Activated CD4-positive, alpha-beta T cell treated with anti-CD3 and anti-CD28 coated beads for 36 hours (primary cell): ENCODE measurements at regions of chr12 and their contacts with region 1.

Region 1: DNA sequence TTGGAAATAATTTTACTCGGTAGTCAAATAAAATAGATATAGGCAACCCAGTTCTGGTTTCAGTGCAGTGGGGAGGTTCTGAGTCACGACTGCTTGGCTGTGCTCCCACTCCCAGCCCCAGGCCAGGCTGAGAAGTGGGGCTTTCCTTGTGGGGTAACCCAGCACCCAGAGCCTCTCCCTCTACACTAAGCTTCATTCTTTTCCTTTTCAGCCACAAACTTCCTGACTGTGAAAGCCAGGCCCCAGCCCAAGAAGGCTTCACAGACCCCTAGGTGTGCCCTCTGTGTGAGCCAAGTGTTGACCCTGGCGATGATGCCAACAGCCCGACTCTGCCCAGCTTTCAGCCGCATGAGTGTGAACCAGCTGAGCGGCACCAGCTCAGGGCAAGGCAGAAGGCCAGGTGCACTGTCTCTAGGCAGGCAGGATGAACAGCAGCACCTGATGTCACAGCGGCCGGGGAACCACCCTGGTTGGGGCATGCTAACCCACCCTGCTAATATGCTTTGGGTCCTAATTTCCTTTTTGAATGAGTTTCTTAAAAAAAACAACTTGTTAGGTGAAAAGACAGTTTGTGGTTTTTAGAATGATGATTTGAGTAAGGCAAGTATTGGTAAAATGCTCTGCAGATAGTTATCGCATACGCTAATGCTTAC is 42.2 kb upstream of the ATP23 start:
- DNase-seq: peak; percentile 91
- ATAC-seq: peak; percentile 92
- H3K4me3 Mint-ChIP-seq: peak overlapping the region; percentile 23
- H3K27ac Mint-ChIP-seq: peak overlapping the region; percentile 92
- H3K4me1 Mint-ChIP-seq: peaks cover 48% of the 10 kb centered on the region
- H3K27me3 Mint-ChIP-seq: no peaks in the 10 kb centered on the region

Region 2: GRCh38 chr12:57771708-57772428 is 127.3 kb before region 1 on chr12 and contains the start of gene METTL1:
- CTCF ChIA-PET with region 1: interaction called, 4 read pairs
- POLR2A ChIA-PET with region 1: no interaction called
- intact Hi-C with region 1: loop called in 1 of 2 experiments (anchors 2 kb)
- DNase-seq: peak; percentile 97
- ATAC-seq: peak; percentile 89
- H3K4me3 Mint-ChIP-seq: peak within 1 kb of the TSS; percentile 94
- H3K27ac Mint-ChIP-seq: peak within 1 kb of the TSS; percentile 98
- H3K4me1 Mint-ChIP-seq: peaks cover 24% of the 10 kb centered on the region
- H3K27me3 Mint-ChIP-seq: no peaks in the 10 kb centered on the region
- total RNA-seq, gene METTL1: 31.9 to 33.5 TPM

Region 3: DNA sequence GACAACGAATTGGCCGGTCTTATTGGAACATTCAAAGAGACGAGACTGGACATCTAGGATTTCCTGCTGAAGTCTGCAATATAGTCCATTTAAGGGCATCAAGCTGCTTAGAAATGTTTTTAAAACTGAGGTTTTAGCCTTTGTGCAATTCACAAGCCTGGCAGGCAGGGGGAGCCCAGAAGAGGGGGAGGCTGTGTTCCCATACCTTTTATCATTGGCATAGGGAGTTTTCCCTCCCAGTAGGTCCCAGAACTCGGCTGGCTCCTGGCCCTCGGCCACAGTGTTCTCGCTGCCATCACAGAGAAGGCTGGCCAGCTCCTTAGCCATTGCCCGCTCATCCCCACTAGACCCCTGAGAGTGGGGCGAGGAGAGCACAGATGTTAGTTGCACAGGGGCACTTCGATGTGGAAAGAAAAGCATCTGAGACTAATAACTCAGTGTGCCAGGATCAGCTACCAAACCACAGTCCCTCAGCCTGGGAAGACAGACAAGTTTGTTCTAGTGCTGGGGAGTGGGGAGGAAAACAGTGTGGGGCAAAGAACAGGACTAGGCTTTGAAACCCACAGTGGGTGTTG is 95.7 kb before region 1 on chr12:
- CTCF ChIA-PET with region 1: interaction called, 51 read pairs
- POLR2A ChIA-PET with region 1: no interaction called
- intact Hi-C with region 1: no loop called
- DNase-seq: peak; percentile 60
- ATAC-seq: peak; percentile 70
- H3K4me3 Mint-ChIP-seq: no peak overlapping the region
- H3K27ac Mint-ChIP-seq: no peak overlapping the region
- H3K4me1 Mint-ChIP-seq: no peaks in the 10 kb centered on the region
- H3K27me3 Mint-ChIP-seq: no peaks in the 10 kb centered on the region

Region 4: DNA sequence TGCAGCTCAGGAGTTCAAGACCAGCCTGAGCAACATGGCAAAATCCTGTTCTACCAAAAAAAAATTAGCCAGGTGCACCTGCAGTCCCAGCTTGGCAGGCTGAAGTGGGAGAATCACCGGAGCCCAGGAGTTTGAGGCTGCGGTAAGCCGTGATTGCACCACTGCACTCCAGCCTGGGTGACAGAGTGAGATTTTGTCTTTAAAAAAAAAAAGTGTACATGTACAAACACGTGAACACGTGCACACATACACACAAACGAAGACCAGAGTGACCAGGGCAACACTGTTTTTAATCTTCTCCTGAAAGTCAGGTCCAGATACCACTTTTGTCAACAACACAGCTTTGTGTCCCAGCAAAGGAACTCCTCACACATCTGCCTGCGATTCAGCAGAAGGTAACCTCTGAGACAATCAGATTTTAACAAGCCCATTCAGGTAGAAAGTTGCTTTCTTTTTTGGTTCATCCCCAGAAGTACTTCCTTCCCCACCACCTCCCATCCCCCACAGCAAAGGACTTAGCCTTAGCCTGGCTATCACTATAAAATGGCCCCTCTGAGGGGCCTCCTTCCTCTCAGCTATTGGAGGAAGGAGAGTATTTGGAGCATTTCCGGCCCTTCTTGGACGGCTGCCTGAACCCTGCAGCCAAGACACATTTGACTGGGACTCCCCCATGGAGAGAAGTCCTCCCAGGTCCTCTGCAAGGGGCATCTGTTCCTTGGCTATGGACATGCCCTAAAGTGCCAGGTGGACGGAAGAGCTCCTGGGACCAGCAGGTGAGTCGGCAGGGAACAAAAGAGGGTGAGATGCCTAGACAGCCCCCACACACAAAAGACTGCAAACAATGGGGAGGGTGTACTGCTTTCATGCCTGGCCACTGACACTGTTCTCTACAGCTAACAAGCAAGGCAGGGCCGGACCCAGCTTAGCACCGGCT is 62.4 kb before region 1 on chr12:
- CTCF ChIA-PET with region 1: interaction called, 57 read pairs
- POLR2A ChIA-PET with region 1: interaction called, 5 read pairs
- intact Hi-C with region 1: loop called in 1 of 2 experiments (anchors 2 kb)
- DNase-seq: peak; percentile 68
- ATAC-seq: peak; percentile 51
- H3K4me3 Mint-ChIP-seq: peak overlapping the region; percentile 49
- H3K27ac Mint-ChIP-seq: peak overlapping the region; percentile 85
- H3K4me1 Mint-ChIP-seq: peaks cover 94% of the 10 kb centered on the region
- H3K27me3 Mint-ChIP-seq: no peaks in the 10 kb centered on the region

Region 5: GRCh38 chr12:57865090-57865751 is 33.9 kb before region 1 on chr12:
- CTCF ChIA-PET with region 1: interaction called, 16 read pairs
- POLR2A ChIA-PET with region 1: interaction called, 3 read pairs
- intact Hi-C with region 1: loop called (anchors 2 kb)
- DNase-seq: peak; percentile 84
- ATAC-seq: peak; percentile 96
- H3K4me3 Mint-ChIP-seq: peak overlapping the region; percentile 66
- H3K27ac Mint-ChIP-seq: peak overlapping the region; percentile 74
- H3K4me1 Mint-ChIP-seq: peaks cover 7% of the 10 kb centered on the region
- H3K27me3 Mint-ChIP-seq: peaks cover 2% of the 10 kb centered on the region

Region 6: GRCh38 chr12:57888409-57889157 is 10.6 kb before region 1 on chr12:
- CTCF ChIA-PET with region 1: interaction called, 11 read pairs
- POLR2A ChIA-PET with region 1: no interaction called
- intact Hi-C with region 1: no loop called
- DNase-seq: peak; percentile 59
- ATAC-seq: peak; percentile 89
- H3K4me3 Mint-ChIP-seq: no peak overlapping the region
- H3K27ac Mint-ChIP-seq: peak overlapping the region; percentile 37
- H3K4me1 Mint-ChIP-seq: peaks cover 14% of the 10 kb centered on the region
- H3K27me3 Mint-ChIP-seq: peaks cover 2% of the 10 kb centered on the region

Region 7: DNA sequence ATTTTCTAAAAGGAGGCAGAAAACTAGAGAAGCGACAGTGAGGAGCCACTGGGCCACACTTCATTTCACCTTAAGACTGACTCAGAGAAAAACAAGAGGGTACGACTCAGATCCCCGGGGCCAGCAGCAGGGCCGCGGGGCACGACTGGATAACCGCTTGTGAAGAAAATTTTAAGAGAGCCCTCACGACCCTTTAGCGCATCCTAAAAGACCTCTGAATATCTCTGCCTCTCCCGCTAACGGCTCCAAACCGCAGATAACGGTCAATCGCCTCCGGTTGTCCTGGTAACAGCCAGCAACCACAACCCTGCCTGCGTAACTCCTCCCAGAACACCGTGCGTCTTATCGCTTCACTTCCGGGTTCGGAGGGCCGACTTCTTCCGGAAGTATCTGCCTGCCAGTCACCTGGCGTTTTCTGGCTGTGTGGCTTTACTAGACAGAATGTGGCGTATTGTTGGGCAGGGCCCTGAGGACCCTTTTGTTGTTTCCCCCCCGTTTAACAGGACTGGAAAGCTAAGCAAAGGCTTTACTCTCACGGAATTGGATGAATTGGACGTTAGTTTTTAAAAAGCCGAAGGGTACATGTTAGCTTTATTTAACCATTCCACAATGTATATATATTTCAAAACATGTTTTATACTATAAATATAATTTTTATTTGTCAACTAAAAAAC is 36.8 kb after region 1 on chr12:
- CTCF ChIA-PET with region 1: interaction called, 3 read pairs
- POLR2A ChIA-PET with region 1: no interaction called
- intact Hi-C with region 1: loop called (anchors 2 kb)
- DNase-seq: peak; percentile 95
- ATAC-seq: peak; percentile 92
- H3K4me3 Mint-ChIP-seq: peak overlapping the region; percentile 95
- H3K27ac Mint-ChIP-seq: peak overlapping the region; percentile 97
- H3K4me1 Mint-ChIP-seq: peaks cover 29% of the 10 kb centered on the region
- H3K27me3 Mint-ChIP-seq: no peaks in the 10 kb centered on the region

Region 8: GRCh38 chr12:58067599-58068387 is 168.7 kb after region 1 on chr12:
- CTCF ChIA-PET with region 1: no interaction called
- POLR2A ChIA-PET with region 1: no interaction called
- intact Hi-C with region 1: no loop called
- DNase-seq: no peak
- ATAC-seq: no peak
- H3K4me3 Mint-ChIP-seq: no peak overlapping the region
- H3K27ac Mint-ChIP-seq: no peak overlapping the region
- H3K4me1 Mint-ChIP-seq: no peaks in the 10 kb centered on the region
- H3K27me3 Mint-ChIP-seq: no peaks in the 10 kb centered on the region